ENCODE measurements at regions of chr7 and their contacts with region 1.

Region 1: DNA sequence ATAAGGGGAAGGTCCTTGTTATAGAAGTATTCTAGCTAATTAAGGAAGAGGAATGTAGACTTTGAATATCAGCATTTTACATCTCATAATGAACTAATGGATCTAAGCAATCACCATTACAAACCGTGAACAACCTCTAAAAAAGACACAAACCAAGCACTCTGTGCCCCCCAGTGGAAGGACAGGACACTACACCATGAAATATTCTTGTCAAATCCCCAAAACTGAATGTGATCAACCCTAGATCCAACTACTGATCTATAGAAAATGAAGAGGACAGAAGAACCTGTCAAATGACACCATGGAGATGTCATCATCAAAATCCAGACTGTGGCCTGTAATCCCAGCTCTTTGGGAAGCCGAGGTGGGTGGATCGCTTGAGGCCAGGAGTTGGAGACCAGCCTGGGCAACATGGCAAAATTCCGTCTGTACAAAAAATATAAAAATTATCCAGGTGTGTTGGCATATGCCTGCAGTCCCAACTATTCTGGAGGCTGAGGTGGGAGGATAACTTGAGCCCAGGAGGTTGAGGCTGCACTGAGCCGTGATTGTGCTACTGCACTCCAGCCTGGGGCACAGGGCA is 111.3 kb upstream of the CARD11 start:
- DNase-seq: peak; percentile 79
- ATAC-seq: peak; percentile 83
- H3K4me3 Mint-ChIP-seq: no peak overlapping the region
- H3K27ac Mint-ChIP-seq: peak overlapping the region; percentile 22
- H3K4me1 Mint-ChIP-seq: peaks cover 31% of the 10 kb centered on the region
- H3K27me3 Mint-ChIP-seq: peaks cover 7% of the 10 kb centered on the region

Region 2: GRCh38 chr7:2886900-2887299 is 268.1 kb before region 1 on chr7:
- CTCF ChIA-PET with region 1: interaction called, 20 read pairs
- DNase-seq: peak; percentile 73
- ATAC-seq: peak; percentile 74
- H3K4me3 Mint-ChIP-seq: no peak overlapping the region
- H3K27ac Mint-ChIP-seq: peak overlapping the region; percentile 2
- H3K4me1 Mint-ChIP-seq: peaks cover 4% of the 10 kb centered on the region
- H3K27me3 Mint-ChIP-seq: peaks cover 7% of the 10 kb centered on the region

Region 3: DNA sequence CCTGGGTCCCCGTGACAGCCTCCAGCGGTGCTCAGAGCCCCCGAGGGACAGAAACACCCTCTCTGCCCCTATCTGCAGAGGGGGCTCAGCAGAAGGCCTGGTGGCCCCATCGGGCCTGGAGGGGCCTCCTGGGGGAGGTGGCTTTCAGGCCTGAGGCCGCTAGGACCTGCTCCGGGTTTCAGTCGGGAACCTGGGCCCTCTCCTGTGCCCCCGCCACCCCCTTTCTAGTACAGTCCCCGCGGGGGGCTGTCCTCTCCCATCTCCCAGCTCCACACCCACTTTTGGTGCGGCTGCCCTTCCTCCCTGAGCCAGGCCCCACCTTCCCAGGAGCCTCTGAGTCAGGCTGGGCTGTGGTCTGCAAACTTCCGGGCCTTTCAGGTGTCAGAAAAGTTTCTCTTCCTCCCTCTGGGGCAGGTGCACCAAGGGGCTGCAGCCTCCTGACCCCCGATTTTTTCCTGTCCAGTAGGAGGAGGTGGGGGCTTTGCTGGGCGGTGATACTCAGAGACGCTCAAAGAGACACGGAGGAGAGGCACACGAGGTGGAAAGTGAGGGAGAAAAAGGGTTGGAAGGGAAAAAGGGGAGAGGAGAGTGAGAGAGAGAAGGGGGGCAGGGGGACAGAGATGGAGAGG is 112.0 kb before region 1 on chr7:
- CTCF ChIA-PET with region 1: interaction called, 14 read pairs
- DNase-seq: peak; percentile 88
- ATAC-seq: peak; percentile 82
- H3K4me3 Mint-ChIP-seq: peak overlapping the region; percentile 99
- H3K27ac Mint-ChIP-seq: peak overlapping the region; percentile 95
- H3K4me1 Mint-ChIP-seq: peaks cover 49% of the 10 kb centered on the region
- H3K27me3 Mint-ChIP-seq: no peaks in the 10 kb centered on the region

Region 4: GRCh38 chr7:3087243-3087642 is 67.8 kb before region 1 on chr7:
- CTCF ChIA-PET with region 1: interaction called, 37 read pairs
- DNase-seq: no peak
- ATAC-seq: no peak
- H3K4me3 Mint-ChIP-seq: no peak overlapping the region
- H3K27ac Mint-ChIP-seq: no peak overlapping the region
- H3K4me1 Mint-ChIP-seq: peaks cover 27% of the 10 kb centered on the region
- H3K27me3 Mint-ChIP-seq: no peaks in the 10 kb centered on the region

Region 5: GRCh38 chr7:3267966-3268690 is 113.1 kb after region 1 on chr7:
- CTCF ChIA-PET with region 1: no interaction called
- DNase-seq: no peak
- ATAC-seq: no peak
- H3K4me3 Mint-ChIP-seq: no peak overlapping the region
- H3K27ac Mint-ChIP-seq: no peak overlapping the region
- H3K4me1 Mint-ChIP-seq: no peaks in the 10 kb centered on the region
- H3K27me3 Mint-ChIP-seq: peaks cover 29% of the 10 kb centered on the region

Measured in activated CD8-positive, alpha-beta memory T cell treated with anti-CD3 and anti-CD28 coated beads, Interleukin-2, amount 10 ng/mL, durations not matched to agents 7 days and 5 days (primary cell).